Left colon (tissue), 2 donors: ENCODE measurements at regions of chr12 and their contacts with region 1.

Region 1: DNA sequence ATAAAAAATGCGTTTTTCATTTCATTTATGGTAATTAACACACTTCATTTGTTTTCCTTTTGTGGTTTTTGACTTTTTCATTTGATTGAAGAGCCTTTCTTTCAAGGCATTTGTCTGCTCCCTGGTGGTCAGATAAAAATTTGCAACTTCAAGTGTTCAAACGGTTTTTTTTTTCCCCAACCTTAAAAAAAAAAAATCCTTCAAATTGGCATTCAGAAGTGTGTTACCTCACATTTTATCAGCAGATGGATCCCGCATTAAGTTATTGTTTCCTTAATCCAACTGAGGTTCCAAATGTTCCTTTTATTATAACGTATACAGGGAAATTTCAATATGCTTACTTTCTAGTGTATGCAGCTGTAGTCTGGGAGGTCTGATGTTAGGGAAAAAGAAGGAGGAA is 47.2 kb downstream of the MYF5 start:
- DNase-seq: no peak
- ATAC-seq: no peak

Region 2: GRCh38 chr12:80412369-80412953 is 351.4 kb before region 1 on chr12:
- intact Hi-C with region 1: loop called in 1 of 2 experiments (anchors 10 kb)
- DNase-seq: no peak
- ATAC-seq: peak; percentile 35